AG04449 (cell line): ENCODE measurements at regions of chr2 and their contacts with region 1.

Region 1: DNA sequence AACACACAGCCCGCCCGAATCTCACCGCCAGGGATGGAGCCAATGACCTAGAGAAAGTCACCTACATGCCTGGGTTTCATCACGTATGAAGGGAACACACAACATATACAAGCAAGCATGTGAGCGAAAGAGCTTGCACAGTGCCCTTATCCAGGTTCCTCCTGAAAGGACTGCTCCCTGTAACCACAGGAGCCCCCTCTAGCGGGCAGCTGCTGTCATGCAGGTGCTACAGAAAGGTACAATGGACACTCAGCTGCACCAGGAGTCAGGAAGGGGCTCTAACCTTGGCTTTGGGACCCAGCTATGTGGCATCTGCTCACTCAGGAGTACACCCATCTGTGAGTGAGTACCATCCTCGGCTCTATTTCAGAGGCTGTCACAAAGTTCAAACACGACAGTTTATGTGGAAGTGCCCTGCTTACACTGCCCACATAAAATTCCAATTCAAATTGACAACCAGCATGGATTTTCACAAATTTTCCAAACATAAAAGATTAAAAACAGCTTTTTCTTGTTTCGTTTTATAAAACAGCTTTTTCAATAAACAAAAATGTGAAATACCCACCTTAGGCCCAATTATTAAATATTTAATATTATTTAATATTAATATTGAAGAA is 3.5 kb downstream of the NDUFA10 start:
- DNase-seq: no peak
- H3K4me3 ChIP-seq: no peak overlapping the region
- CTCF ChIP-seq: peak; percentile 88

Region 2: GRCh38 chr2:239997686-239998405 is 23.8 kb before region 1 on chr2:
- CTCF ChIA-PET with region 1: interaction called, 10 read pairs
- POLR2A ChIA-PET with region 1: no interaction called
- DNase-seq: no peak
- H3K4me3 ChIP-seq: no peak overlapping the region
- CTCF ChIP-seq: no peak